Aorta (tissue), 5 donors: ENCODE measurements at regions of chr11 and their contacts with region 1.

Region 1: GRCh38 chr11:121473064-121473777 is 20.5 kb upstream of the SORL1-AS1 start:
- DNase-seq: peak in 1 of 2 donors; percentile 77
- ATAC-seq: no peak
- H3K4me3 ChIP-seq: no peak overlapping the region
- H3K27ac ChIP-seq: no peak overlapping the region
- H3K4me1 ChIP-seq: peaks cover 0 to 2% of the 10 kb centered on the region in 2 donors
- H3K27me3 ChIP-seq: no peaks in the 10 kb centered on the region

Region 2: GRCh38 chr11:121514432-121515334 is 41.5 kb after region 1 on chr11:
- intact Hi-C with region 1: loop called in 1 of 2 experiments (anchors 5 kb)
- DNase-seq: no peak
- ATAC-seq: no peak
- H3K4me3 ChIP-seq: no peak overlapping the region
- H3K27ac ChIP-seq: no peak overlapping the region
- H3K4me1 ChIP-seq: no peaks in the 10 kb centered on the region
- H3K27me3 ChIP-seq: no peaks in the 10 kb centered on the region